ENCODE measurements at regions of chr2 and their contacts with region 1.

Region 1: DNA sequence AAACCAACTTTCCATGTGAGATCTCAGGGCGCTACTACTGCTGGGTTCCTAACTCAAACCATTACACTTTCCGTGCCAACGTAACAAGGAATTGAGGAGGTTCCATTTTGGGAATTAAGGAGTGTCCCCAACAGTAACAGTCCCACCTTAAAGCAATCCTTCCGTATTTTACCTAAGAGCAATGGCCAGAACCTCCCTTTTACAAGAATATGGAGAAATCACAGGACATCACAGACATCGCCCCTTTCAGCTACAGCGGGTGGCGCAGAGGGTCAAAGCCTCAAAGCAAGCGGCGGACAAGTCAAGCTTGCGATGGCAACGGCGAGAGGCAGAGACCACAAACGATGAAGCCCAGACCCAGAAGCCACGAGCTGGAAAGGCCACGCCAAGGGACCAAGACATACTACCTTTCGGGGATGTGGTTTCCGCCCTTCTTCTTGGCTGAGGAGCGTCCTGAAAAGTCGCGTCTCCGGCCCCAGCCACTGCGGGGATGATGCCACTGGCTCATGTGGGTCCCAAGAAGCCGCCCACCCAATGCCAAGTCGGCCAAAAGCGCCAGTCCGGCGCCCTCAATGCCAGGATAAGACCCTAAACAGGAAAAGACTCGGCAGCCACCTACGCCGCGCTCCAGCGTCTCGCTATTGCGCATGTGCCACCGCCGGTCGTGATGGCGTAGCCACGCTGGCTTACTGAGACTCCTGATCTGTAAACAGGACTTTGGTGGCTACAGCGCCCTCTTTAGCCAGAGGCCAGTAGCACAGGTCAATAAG is at the start of gene DUSP11:
- DNase-seq: peak; percentile 88 to 92
- H3K4me3 ChIP-seq: peak within 1 kb of the TSS; percentile 70
- H3K27ac ChIP-seq: peak within 1 kb of the TSS; percentile 15; the same call in 1 of the 2 replicates
- H3K4me1 ChIP-seq: peaks cover 22% of the 10 kb centered on the region
- H3K27me3 ChIP-seq: no peaks in the 10 kb centered on the region
- CTCF ChIP-seq: peak; percentile 98
- total RNA-seq, gene DUSP11: 18.8 and 24.1 TPM in 2 replicates

Region 2: GRCh38 chr2:73117441-73117840 is 662.2 kb before region 1 on chr2:
- CTCF ChIA-PET with region 1: no interaction called
- POLR2A ChIA-PET with region 1: no interaction called
- intact Hi-C with region 1: no loop called
- DNase-seq: no peak
- H3K4me3 ChIP-seq: no peak overlapping the region
- H3K27ac ChIP-seq: no peak overlapping the region
- H3K4me1 ChIP-seq: 0 out of 2 replicates have a peak, but pooled peaks cover 4% of the 10 kb centered on the region
- H3K27me3 ChIP-seq: no peaks in the 10 kb centered on the region
- CTCF ChIP-seq: no peak

Region 3: DNA sequence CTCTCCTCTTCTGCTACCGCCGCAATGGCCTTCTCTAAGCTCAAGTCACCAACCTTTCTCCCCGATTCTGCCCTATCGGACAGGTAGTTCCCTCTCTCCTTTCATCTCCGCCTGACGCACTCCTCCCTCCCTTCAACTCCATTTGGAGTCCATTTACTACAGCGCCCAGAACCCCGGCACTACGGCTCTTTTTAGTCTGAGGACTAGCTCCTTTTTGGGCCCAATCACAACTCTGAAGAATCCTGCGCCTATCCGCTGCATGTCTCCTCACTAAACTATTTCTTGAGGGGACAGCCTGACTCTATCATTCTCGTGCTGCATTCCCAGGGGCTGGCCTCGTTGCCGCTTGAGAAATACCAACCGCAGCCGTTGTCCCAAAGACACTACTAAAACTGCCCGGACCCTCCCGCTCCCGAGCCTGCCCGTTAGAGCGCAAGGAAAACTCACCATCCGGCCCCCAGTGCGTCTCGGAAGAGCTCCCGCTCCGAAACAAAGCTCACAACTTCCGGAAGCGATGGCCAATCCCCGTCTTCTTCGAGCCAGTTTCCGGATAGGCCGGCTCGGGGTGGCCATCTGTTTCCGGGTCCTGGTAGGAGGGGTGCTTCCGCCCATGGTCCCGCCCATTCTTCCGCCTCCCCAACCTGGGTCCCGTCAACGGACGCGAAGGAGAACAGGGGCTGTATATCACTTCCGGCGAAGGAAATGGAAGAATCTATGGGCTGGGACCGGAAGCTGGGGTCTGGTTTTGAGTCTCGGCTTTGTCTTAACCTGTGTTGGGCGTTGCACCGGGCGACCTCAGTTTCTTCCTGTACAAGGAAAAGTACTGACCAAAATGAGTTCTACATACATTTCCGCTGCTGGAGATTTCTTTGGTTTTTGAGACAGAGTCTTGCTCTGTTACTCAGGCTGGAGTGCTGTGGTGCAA is 42.5 kb before region 1 on chr2 and contains the start of gene TPRKB:
- CTCF ChIA-PET with region 1: interaction called, 22 read pairs
- POLR2A ChIA-PET with region 1: no interaction called
- intact Hi-C with region 1: no loop called
- DNase-seq: peak; percentile 94
- H3K4me3 ChIP-seq: peak within 1 kb of the TSS; percentile 94
- H3K27ac ChIP-seq: peak within 1 kb of the TSS; percentile 23
- H3K4me1 ChIP-seq: peaks cover 12% of the 10 kb centered on the region; the same call in 1 of the 2 replicates
- H3K27me3 ChIP-seq: no peaks in the 10 kb centered on the region
- CTCF ChIP-seq: no peak
- total RNA-seq, gene TPRKB: 20.4 and 33.8 TPM in 2 replicates

Region 4: DNA sequence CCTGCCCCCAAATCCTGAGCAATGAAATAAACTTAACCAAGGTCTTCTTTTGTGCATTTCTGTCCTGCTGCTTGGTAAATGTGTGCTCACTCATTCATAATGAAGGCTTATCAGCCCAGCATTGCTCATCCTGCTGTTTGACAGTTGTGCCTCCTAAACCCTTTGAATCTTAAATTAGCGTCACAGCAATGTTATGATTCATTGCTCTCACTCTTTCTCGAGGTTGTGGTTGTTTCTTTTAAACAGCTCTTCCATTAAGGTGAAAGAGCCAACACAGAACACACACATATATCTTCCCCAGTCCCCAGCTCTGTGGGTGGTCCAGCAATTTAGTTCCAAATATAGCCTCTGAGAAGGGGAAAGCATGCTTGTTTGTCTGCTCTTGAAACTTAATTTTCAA is 1697.1 kb after region 1 on chr2:
- CTCF ChIA-PET with region 1: no interaction called
- POLR2A ChIA-PET with region 1: interaction called, 11 read pairs
- intact Hi-C with region 1: no loop called
- DNase-seq: no peak
- H3K4me3 ChIP-seq: no peak overlapping the region
- H3K27ac ChIP-seq: no peak overlapping the region
- H3K4me1 ChIP-seq: no peaks in the 10 kb centered on the region
- H3K27me3 ChIP-seq: no peaks in the 10 kb centered on the region
- CTCF ChIP-seq: no peak